CD4-positive, alpha-beta T cell (primary cell): ENCODE measurements at regions of chr10 and their contacts with region 1.

Region 1: GRCh38 chr10:80464557-80465450 is 10.7 kb downstream of the TSPAN14 start:
- DNase-seq: peak in 6 of 14 experiments; percentile 21 to 58 (median 47)
- ATAC-seq: no peak
- H3K4me3 ChIP-seq: peak overlapping the region; percentile 49
- H3K4me3 Mint-ChIP-seq: peak overlapping the region; percentile 85
- H3K27ac ChIP-seq: peak overlapping the region; percentile 85 to 91
- H3K27ac Mint-ChIP-seq: peak overlapping the region; percentile 92
- H3K4me1 ChIP-seq: peaks cover 100% of the 10 kb centered on the region
- H3K4me1 Mint-ChIP-seq: peaks cover 97% of the 10 kb centered on the region
- H3K27me3 ChIP-seq: no peaks in the 10 kb centered on the region
- H3K27me3 Mint-ChIP-seq: no peaks in the 10 kb centered on the region
- CTCF ChIP-seq: no peak

Region 2: DNA sequence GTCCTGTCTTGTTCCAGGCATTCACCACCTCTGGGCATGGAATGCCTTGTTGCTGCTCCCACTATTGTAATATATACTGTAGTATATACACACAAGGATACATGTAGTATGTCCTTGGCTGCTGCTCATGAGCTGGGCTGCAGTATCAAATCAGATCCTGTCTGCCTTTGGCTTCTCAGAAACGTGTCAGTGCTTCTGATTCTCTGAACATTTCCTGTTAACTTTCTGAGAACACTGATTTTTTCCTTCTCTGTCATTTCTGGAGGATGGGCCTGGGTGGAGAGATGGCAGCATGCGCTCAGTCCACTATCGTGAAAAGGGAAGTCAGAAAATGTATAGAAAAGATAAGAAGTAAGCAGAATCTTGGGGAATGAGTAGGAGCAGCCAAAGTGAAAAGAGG is 916.8 kb before region 1 on chr10:
- CTCF ChIA-PET with region 1: no interaction called
- POLR2A ChIA-PET with region 1: no interaction called
- intact Hi-C with region 1: no loop called
- DNase-seq: peak in 1 of 14 experiments; percentile 30
- ATAC-seq: no peak
- H3K4me3 ChIP-seq: no peak overlapping the region
- H3K4me3 Mint-ChIP-seq: no peak overlapping the region
- H3K27ac ChIP-seq: no peak overlapping the region
- H3K27ac Mint-ChIP-seq: no peak overlapping the region
- H3K4me1 ChIP-seq: peaks cover 14% of the 10 kb centered on the region
- H3K4me1 Mint-ChIP-seq: peaks cover 13% of the 10 kb centered on the region
- H3K27me3 ChIP-seq: no peaks in the 10 kb centered on the region
- H3K27me3 Mint-ChIP-seq: no peaks in the 10 kb centered on the region
- CTCF ChIP-seq: no peak

Region 3: GRCh38 chr10:80397014-80397413 is 67.8 kb before region 1 on chr10:
- CTCF ChIA-PET with region 1: no interaction called
- POLR2A ChIA-PET with region 1: no interaction called
- intact Hi-C with region 1: no loop called
- DNase-seq: no peak
- ATAC-seq: no peak
- H3K4me3 ChIP-seq: no peak overlapping the region
- H3K4me3 Mint-ChIP-seq: no peak overlapping the region
- H3K27ac ChIP-seq: no peak overlapping the region
- H3K27ac Mint-ChIP-seq: no peak overlapping the region
- H3K4me1 ChIP-seq: no peaks in the 10 kb centered on the region
- H3K4me1 Mint-ChIP-seq: no peaks in the 10 kb centered on the region
- H3K27me3 ChIP-seq: no peaks in the 10 kb centered on the region
- H3K27me3 Mint-ChIP-seq: no peaks in the 10 kb centered on the region
- CTCF ChIP-seq: no peak

Region 4: GRCh38 chr10:80498833-80499741 is 34.3 kb after region 1 on chr10:
- CTCF ChIA-PET with region 1: interaction called, 250 read pairs
- POLR2A ChIA-PET with region 1: interaction called, 420 read pairs
- intact Hi-C with region 1: loop called in 1 of 2 experiments (anchors 1 kb)
- DNase-seq: peak in 9 of 14 experiments; percentile 31 to 77 (median 49)
- ATAC-seq: peak; percentile 30
- H3K4me3 ChIP-seq: peak overlapping the region; percentile 10
- H3K4me3 Mint-ChIP-seq: peak overlapping the region; percentile 83
- H3K27ac ChIP-seq: peak overlapping the region; percentile 49 to 54
- H3K27ac Mint-ChIP-seq: peak overlapping the region; percentile 78
- H3K4me1 ChIP-seq: peaks cover 89% of the 10 kb centered on the region
- H3K4me1 Mint-ChIP-seq: peaks cover 100% of the 10 kb centered on the region
- H3K27me3 ChIP-seq: no peaks in the 10 kb centered on the region
- H3K27me3 Mint-ChIP-seq: no peaks in the 10 kb centered on the region
- CTCF ChIP-seq: no peak

Region 5: GRCh38 chr10:80504158-80504811 is 39.5 kb after region 1 on chr10:
- CTCF ChIA-PET with region 1: interaction called, 250 read pairs
- POLR2A ChIA-PET with region 1: interaction called, 302 read pairs
- intact Hi-C with region 1: loop called in 1 of 2 experiments (anchors 2 kb)
- DNase-seq: no peak
- ATAC-seq: no peak
- H3K4me3 ChIP-seq: no peak overlapping the region
- H3K4me3 Mint-ChIP-seq: peak overlapping the region; percentile 68
- H3K27ac ChIP-seq: peak overlapping the region; percentile 46 to 54
- H3K27ac Mint-ChIP-seq: peak overlapping the region; percentile 78
- H3K4me1 ChIP-seq: peaks cover 72% of the 10 kb centered on the region
- H3K4me1 Mint-ChIP-seq: peaks cover 82% of the 10 kb centered on the region
- H3K27me3 ChIP-seq: no peaks in the 10 kb centered on the region
- H3K27me3 Mint-ChIP-seq: no peaks in the 10 kb centered on the region
- CTCF ChIP-seq: no peak